ENCODE measurements at regions of chr5 and their contacts with region 1.

Region 1: DNA sequence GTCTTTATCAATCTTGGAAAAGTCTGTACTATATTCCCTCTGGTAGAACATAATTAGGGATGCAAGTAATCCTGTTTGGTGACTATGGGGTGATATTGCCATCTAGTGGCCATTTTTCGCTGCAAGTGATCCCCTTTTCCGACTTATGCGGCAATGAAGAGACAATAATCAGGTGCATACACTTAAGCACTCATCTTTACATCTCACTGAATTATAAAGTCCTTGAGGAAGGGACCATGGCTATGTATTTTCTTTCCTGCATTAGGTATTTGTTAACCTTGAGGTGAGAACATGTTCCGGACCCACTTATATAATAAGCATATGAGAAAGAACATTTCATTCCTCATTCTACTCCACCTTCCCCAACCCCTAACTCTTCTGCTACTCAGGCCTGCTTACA is 19.6 kb upstream of the LIX1 start:
- DNase-seq: peak; percentile 76
- ATAC-seq: peak; percentile 82
- H3K4me3 ChIP-seq: no peak overlapping the region
- H3K27ac ChIP-seq: no peak overlapping the region
- H3K4me1 ChIP-seq: no peaks in the 10 kb centered on the region
- H3K27me3 ChIP-seq: no peaks in the 10 kb centered on the region
- CTCF ChIP-seq: peak; percentile 84

Region 2: GRCh38 chr5:96614110-96614691 is 547.8 kb before region 1 on chr5:
- CTCF ChIA-PET with region 1: interaction called, 3 read pairs
- POLR2A ChIA-PET with region 1: no interaction called
- in situ Hi-C with region 1: no loop called
- intact Hi-C with region 1: loop called (anchors 10 kb)
- DNase-seq: peak; percentile 96
- ATAC-seq: peak; percentile 93
- H3K4me3 ChIP-seq: peak overlapping the region in 1 of 2 experiments; percentile 26; a peak in 2 of 4 replicates
- H3K27ac ChIP-seq: no peak overlapping the region
- H3K4me1 ChIP-seq: no peaks in the 10 kb centered on the region; the same call in 1 of the 2 replicates
- H3K27me3 ChIP-seq: peaks cover 3% of the 10 kb centered on the region; the same call in 1 of the 2 replicates
- CTCF ChIP-seq: peak; percentile 66

Region 3: GRCh38 chr5:96752341-96753016 is 409.6 kb before region 1 on chr5:
- CTCF ChIA-PET with region 1: interaction called, 5 read pairs
- POLR2A ChIA-PET with region 1: no interaction called
- in situ Hi-C with region 1: no loop called
- intact Hi-C with region 1: loop called (anchors 5 kb)
- DNase-seq: peak; percentile 36
- ATAC-seq: no peak
- H3K4me3 ChIP-seq: no peak overlapping the region
- H3K27ac ChIP-seq: no peak overlapping the region
- H3K4me1 ChIP-seq: no peaks in the 10 kb centered on the region
- H3K27me3 ChIP-seq: no peaks in the 10 kb centered on the region
- CTCF ChIP-seq: peak; percentile 72; the same call in 1 of the 2 replicates

Region 4: GRCh38 chr5:96868603-96869371 is 293.3 kb before region 1 on chr5:
- CTCF ChIA-PET with region 1: interaction called, 5 read pairs
- POLR2A ChIA-PET with region 1: no interaction called
- in situ Hi-C with region 1: no loop called
- intact Hi-C with region 1: loop called (anchors 2 kb)
- DNase-seq: peak; percentile 79
- ATAC-seq: peak; percentile 93
- H3K4me3 ChIP-seq: no peak overlapping the region
- H3K27ac ChIP-seq: no peak overlapping the region
- H3K4me1 ChIP-seq: no peaks in the 10 kb centered on the region
- H3K27me3 ChIP-seq: peaks cover 7% of the 10 kb centered on the region; the same call in 1 of the 2 replicates
- CTCF ChIP-seq: peak; percentile 92

Region 5: DNA sequence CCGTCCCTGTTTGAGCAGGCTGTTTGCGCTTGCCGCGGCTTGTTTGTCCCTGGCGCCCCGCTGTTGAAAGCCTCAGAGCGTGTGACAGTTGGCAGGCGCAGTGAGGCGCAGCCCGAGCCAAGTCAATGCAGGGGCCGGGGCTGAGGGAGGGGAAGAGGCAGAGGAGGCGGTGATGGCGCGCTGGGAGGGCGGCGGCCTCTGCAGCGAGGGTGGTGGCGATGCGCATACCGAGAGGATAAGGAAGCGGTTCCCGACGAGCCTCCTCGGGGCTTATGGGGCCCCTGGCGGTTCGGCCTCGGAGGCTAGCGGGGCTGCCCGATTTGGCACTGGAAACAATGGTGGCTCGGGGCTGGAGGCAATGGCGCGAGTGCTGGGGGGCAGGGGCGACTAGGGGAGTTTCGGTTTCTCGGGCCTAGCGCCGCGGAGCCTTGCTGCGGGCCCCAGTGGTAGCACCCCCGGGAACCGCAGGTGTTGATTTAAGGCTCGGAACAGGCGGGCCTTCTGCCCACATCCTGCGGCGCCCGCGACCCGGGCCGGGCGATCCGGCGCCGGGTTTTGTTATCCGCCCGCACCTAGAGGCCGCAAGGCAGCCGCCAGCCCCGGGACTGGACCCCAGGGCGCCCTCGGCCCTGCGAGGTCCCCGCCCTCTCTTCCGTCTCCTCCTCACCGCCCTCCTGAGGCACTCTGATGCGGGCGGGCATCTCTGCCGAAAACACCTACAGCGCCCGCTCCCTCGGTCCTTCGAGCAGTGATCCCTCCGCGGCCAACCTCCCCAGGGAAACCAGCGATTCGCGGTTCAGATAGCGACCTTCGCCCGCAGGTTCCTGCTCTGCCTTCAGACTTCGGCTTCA is 227.1 kb before region 1 on chr5:
- CTCF ChIA-PET with region 1: no interaction called
- POLR2A ChIA-PET with region 1: no interaction called
- in situ Hi-C with region 1: no loop called
- intact Hi-C with region 1: loop called (anchors 5 kb)
- DNase-seq: peak; percentile 77
- ATAC-seq: peak; percentile 88
- H3K4me3 ChIP-seq: peak overlapping the region; percentile 87 to 94
- H3K27ac ChIP-seq: peak overlapping the region; percentile 97
- H3K4me1 ChIP-seq: peaks cover 35% of the 10 kb centered on the region
- H3K27me3 ChIP-seq: no peaks in the 10 kb centered on the region
- CTCF ChIP-seq: peak; percentile 13; the same call in 1 of the 2 replicates

Region 6: DNA sequence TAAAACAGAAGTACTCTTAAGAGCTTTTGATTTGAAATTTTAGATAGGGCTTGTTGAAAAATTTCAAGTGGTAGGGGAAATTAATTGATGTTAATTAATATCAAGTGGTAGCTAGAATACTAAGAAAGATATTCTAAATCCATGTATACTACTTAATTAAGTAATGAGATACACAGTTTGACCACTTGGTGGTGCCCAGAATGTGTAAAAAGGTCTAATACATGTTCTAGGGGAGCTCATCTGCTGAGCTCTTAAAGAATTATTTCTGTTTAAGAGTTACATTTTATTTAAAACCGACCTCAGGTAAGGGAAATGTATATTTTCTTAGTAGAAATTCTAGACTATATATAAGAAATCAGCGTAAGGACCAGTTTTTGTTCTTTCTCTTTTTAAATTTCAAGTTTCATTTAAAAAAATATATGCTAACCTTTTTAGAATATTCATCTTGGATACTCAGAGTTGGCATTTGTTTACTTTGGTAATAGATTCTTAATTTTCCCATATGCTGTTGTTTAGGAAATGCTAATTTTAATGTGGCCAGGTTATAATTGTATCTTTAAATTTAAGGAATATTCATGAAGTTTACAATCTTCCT is 164.7 kb before region 1 on chr5:
- CTCF ChIA-PET with region 1: no interaction called
- POLR2A ChIA-PET with region 1: no interaction called
- in situ Hi-C with region 1: no loop called
- intact Hi-C with region 1: loop called (anchors 5 kb)
- DNase-seq: peak; percentile 20
- ATAC-seq: 0 out of 2 replicates have a peak, but pooled peaks have one; percentile 65
- H3K4me3 ChIP-seq: no peak overlapping the region
- H3K27ac ChIP-seq: no peak overlapping the region
- H3K4me1 ChIP-seq: no peaks in the 10 kb centered on the region
- H3K27me3 ChIP-seq: no peaks in the 10 kb centered on the region
- CTCF ChIP-seq: peak; percentile 53; the same call in 1 of the 2 replicates

Region 7: DNA sequence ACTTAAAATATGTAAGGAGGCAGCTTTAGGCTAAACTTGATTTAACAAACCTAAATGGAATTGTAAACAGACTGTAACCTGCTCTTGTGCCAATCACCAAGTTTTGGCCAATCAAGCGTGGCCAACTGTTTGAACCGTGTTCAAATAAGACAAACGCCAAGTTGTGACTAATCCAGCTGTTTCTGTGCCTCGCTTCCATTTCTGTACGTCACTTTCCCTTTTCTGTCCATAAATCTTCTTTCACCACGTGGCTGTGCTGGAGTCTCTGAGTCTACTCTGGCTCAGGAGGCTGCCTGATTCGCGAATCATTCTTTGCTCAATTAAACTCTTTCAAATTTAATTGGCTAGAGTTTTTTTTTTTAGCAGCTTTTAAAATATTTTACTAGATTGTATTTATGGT is 90.9 kb before region 1 on chr5:
- CTCF ChIA-PET with region 1: no interaction called
- POLR2A ChIA-PET with region 1: no interaction called
- in situ Hi-C with region 1: no loop called
- intact Hi-C with region 1: no loop called
- DNase-seq: peak; percentile 7
- ATAC-seq: no peak
- H3K4me3 ChIP-seq: no peak overlapping the region
- H3K27ac ChIP-seq: no peak overlapping the region
- H3K4me1 ChIP-seq: no peaks in the 10 kb centered on the region
- H3K27me3 ChIP-seq: peaks cover 2% of the 10 kb centered on the region
- CTCF ChIP-seq: no peak

Measured in Panc1 (cell line).